A673 (cell line): ENCODE measurements at regions of chr11 and their contacts with region 1.

Region 1: GRCh38 chr11:78478536-78478935 is 60.9 kb upstream of the GAB2 start:
- DNase-seq: peak; percentile 35
- H3K4me3 ChIP-seq: no peak overlapping the region
- H3K27ac ChIP-seq: no peak overlapping the region
- H3K4me1 ChIP-seq: peaks cover 16% of the 10 kb centered on the region
- H3K27me3 ChIP-seq: no peaks in the 10 kb centered on the region
- CTCF ChIP-seq: no peak

Region 2: GRCh38 chr11:78188286-78189173 is 290.0 kb before region 1 on chr11 and contains the starts of genes KCTD21 and USP35:
- CTCF ChIA-PET with region 1: no interaction called
- POLR2A ChIA-PET with region 1: interaction called, 15 read pairs
- intact Hi-C with region 1: no loop called
- DNase-seq: peak; percentile 99
- H3K4me3 ChIP-seq: peak within 1 kb of the TSS; percentile 97
- H3K27ac ChIP-seq: peak within 1 kb of the TSS; percentile 84
- H3K4me1 ChIP-seq: peaks cover 13% of the 10 kb centered on the region
- H3K27me3 ChIP-seq: no peaks in the 10 kb centered on the region
- CTCF ChIP-seq: no peak
- total RNA-seq, gene KCTD21: 3.5 and 5.2 TPM in 2 replicates
- total RNA-seq, gene USP35: 4.8 and 6.7 TPM in 2 replicates

Region 3: GRCh38 chr11:78432058-78432515 is 46.4 kb before region 1 on chr11:
- CTCF ChIA-PET with region 1: no interaction called
- POLR2A ChIA-PET with region 1: no interaction called
- intact Hi-C with region 1: no loop called
- DNase-seq: peak; percentile 64
- H3K4me3 ChIP-seq: no peak overlapping the region
- H3K27ac ChIP-seq: no peak overlapping the region
- H3K4me1 ChIP-seq: peaks cover 5% of the 10 kb centered on the region
- H3K27me3 ChIP-seq: no peaks in the 10 kb centered on the region
- CTCF ChIP-seq: peak; percentile 80